A673 (cell line): ENCODE measurements at regions of chr10 and their contacts with region 1.

Region 1: DNA sequence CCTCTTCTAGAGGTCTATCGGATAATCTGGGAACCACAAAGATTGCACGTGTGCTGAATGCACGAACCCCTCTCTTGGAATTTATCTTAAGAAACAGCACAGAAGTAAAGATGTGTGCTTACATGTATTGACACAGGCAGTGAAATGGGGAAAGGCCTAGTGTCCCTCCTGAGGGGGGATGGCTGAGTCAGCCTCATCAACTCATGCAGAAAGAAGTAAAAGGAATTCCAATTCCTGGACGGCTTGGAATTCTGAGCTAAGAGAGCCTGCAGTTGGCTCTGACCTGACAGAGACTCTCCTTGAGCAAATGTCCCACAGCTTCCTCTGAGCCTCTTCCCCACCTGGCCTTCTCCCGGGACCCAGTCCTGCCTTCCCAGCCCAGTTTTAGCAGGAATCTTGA is 542.3 kb upstream of the ADARB2 start:
- DNase-seq: no peak
- H3K4me3 ChIP-seq: no peak overlapping the region
- H3K27ac ChIP-seq: no peak overlapping the region
- H3K4me1 ChIP-seq: peaks cover 16% of the 10 kb centered on the region
- H3K27me3 ChIP-seq: peaks cover 56% of the 10 kb centered on the region
- CTCF ChIP-seq: no peak

Region 2: GRCh38 chr10:2401459-2401858 is 121.8 kb after region 1 on chr10:
- CTCF ChIA-PET with region 1: no interaction called
- POLR2A ChIA-PET with region 1: interaction called, 12 read pairs
- intact Hi-C with region 1: no loop called
- DNase-seq: no peak
- H3K4me3 ChIP-seq: no peak overlapping the region
- H3K27ac ChIP-seq: no peak overlapping the region
- H3K4me1 ChIP-seq: no peaks in the 10 kb centered on the region
- H3K27me3 ChIP-seq: peaks cover 98% of the 10 kb centered on the region
- CTCF ChIP-seq: no peak